CD4-positive, alpha-beta memory T cell (primary cell): ENCODE measurements at regions of chr4 and their contacts with region 1.

Region 1: GRCh38 chr4:2468445-2469192 is at the start of gene RNF4:
- DNase-seq: peak; percentile 94 to 98 (median 97)
- H3K4me3 ChIP-seq: peak within 1 kb of the TSS; percentile 67 to 84
- H3K4me3 Mint-ChIP-seq: peak within 1 kb of the TSS; percentile 95 to 98 (median 95)
- H3K27ac ChIP-seq: peak within 1 kb of the TSS; percentile 98
- H3K27ac Mint-ChIP-seq: peak within 1 kb of the TSS; percentile 96 to 99 (median 98)
- H3K4me1 ChIP-seq: peaks cover 52% of the 10 kb centered on the region
- H3K4me1 Mint-ChIP-seq: peaks cover 28 to 62% (median 41%) of the 10 kb centered on the region in 4 donors
- H3K27me3 ChIP-seq: no peaks in the 10 kb centered on the region
- H3K27me3 Mint-ChIP-seq: no peaks in the 10 kb centered on the region
- total RNA-seq, gene RNF4: 94.0 to 104 TPM

Region 2: DNA sequence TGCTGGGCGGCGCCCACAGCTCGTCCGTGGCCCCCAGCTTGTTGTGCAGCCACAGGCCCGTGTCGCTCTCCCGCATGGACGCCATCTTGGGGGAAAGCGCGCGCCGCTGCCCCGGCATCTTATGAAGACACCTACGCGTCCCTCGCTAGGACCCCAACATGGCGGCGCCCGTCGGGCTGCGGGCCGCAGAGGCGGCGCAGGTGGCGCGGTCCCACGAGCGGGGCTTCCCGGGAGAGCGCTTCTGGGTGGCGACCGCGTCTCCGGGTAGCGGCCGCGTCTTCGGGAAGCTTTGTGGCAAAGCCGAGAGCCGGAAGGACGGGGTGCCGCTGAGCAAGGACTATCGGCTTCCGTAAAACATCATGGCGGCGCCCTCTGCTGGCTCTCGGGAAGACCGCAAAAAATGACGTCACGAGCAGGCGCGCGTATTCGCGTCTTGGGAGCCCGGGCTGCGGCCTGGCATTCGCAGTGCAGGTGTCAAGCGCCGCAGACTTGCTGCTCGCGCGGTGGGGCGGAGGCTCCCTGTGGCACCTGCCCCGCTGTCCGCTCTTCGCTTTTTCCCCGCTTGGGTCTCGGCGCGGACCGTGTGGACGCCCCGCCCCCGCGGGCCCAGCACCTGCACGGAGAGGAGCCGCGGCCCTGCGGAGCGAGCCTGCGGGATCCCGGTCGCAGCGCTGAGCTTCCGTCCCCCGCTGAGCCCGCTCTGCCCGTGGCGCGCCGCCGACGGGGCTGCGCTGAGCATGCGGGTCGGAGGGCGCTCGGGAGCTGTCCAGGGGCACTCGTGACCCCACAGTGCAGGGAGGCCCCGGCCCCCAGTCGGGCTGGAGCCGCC is 459.5 kb before region 1 on chr4 and contains the start of gene NELFA:
- CTCF ChIA-PET with region 1: no interaction called
- POLR2A ChIA-PET with region 1: interaction called, 10 read pairs
- intact Hi-C with region 1: no loop called
- DNase-seq: peak; percentile 95 to 97 (median 97)
- H3K4me3 ChIP-seq: peak within 1 kb of the TSS; percentile 76 to 94
- H3K4me3 Mint-ChIP-seq: peak within 1 kb of the TSS; percentile 92 to 96 (median 94)
- H3K27ac ChIP-seq: peak within 1 kb of the TSS; percentile 95
- H3K27ac Mint-ChIP-seq: peak within 1 kb of the TSS; percentile 94 to 98 (median 97)
- H3K4me1 ChIP-seq: peaks cover 27% of the 10 kb centered on the region
- H3K4me1 Mint-ChIP-seq: peaks cover 29 to 42% (median 31%) of the 10 kb centered on the region in 4 donors
- H3K27me3 ChIP-seq: no peaks in the 10 kb centered on the region
- H3K27me3 Mint-ChIP-seq: no peaks in the 10 kb centered on the region
- total RNA-seq, gene NELFA: 47.0 to 48.3 TPM

Region 3: DNA sequence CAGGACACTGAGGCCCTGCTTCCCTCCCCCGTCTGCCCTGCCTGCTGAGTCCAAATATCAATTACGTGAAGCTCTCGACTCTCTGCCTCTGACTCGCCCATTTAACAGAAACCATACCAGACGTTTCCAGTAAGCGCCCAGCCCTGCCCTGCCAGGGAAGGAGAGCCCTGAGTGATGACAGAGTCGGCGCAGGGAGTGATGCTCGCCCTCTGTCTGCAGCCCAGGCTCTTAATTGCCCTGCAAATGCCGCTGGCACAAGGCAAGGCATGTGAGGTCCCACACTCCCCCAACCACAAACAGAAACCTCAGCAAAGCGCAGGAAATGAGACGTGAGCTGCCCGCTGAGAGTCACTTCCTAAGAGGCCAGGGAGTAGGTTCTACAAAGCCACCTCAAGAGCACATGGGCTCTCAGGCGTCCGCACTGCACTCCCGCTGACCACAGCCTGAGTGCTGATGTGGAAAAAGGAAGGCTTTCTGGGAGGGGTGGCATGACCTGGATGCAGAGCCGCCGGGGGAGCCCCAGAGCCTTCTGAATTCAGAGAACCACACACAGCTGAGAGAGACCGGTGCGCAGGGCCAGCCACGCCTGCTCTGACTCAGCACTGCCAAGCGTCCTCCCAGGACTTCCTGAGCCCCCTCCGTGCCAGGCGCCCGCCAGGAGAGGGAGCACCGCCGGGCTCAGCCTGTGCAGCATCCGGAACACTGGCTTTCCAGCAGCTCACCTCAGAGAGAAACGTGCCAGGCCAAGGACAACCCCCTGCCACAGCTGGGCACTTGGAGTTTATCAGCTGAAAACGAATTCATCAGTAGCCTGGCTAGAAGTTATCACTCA is 55.5 kb before region 1 on chr4:
- CTCF ChIA-PET with region 1: interaction called, 6 read pairs
- POLR2A ChIA-PET with region 1: interaction called, 57 read pairs
- intact Hi-C with region 1: loop called (anchors 1 kb)
- DNase-seq: peak; percentile 96 to 99 (median 97)
- H3K4me3 ChIP-seq: peak overlapping the region; percentile 15 to 55
- H3K4me3 Mint-ChIP-seq: peak overlapping the region; percentile 79 to 90 (median 82)
- H3K27ac ChIP-seq: peak overlapping the region; percentile 86
- H3K27ac Mint-ChIP-seq: peak overlapping the region; percentile 92 to 99 (median 98)
- H3K4me1 ChIP-seq: peaks cover 81% of the 10 kb centered on the region
- H3K4me1 Mint-ChIP-seq: peaks cover 49 to 81% (median 64%) of the 10 kb centered on the region in 4 donors
- H3K27me3 ChIP-seq: no peaks in the 10 kb centered on the region
- H3K27me3 Mint-ChIP-seq: peaks cover 0 to 2% of the 10 kb centered on the region in 2 donors

Region 4: GRCh38 chr4:2418650-2419571 is 49.7 kb before region 1 on chr4 and contains the start of gene CFAP99:
- CTCF ChIA-PET with region 1: interaction called, 5 read pairs
- POLR2A ChIA-PET with region 1: interaction called, 57 read pairs
- intact Hi-C with region 1: loop called (anchors 1 kb)
- DNase-seq: peak; percentile 96 to 99 (median 97)
- H3K4me3 ChIP-seq: peak within 1 kb of the TSS; percentile 44 to 72
- H3K4me3 Mint-ChIP-seq: peak within 1 kb of the TSS; percentile 89 to 95 (median 92)
- H3K27ac ChIP-seq: peak within 1 kb of the TSS; percentile 78
- H3K27ac Mint-ChIP-seq: peak within 1 kb of the TSS; percentile 92 to 100 (median 98)
- H3K4me1 ChIP-seq: peaks cover 39% of the 10 kb centered on the region
- H3K4me1 Mint-ChIP-seq: peaks cover 29 to 48% (median 36%) of the 10 kb centered on the region in 4 donors
- H3K27me3 ChIP-seq: no peaks in the 10 kb centered on the region
- H3K27me3 Mint-ChIP-seq: no peaks in the 10 kb centered on the region
- total RNA-seq, gene CFAP99: 0.12 to 0.19 TPM

Region 5: DNA sequence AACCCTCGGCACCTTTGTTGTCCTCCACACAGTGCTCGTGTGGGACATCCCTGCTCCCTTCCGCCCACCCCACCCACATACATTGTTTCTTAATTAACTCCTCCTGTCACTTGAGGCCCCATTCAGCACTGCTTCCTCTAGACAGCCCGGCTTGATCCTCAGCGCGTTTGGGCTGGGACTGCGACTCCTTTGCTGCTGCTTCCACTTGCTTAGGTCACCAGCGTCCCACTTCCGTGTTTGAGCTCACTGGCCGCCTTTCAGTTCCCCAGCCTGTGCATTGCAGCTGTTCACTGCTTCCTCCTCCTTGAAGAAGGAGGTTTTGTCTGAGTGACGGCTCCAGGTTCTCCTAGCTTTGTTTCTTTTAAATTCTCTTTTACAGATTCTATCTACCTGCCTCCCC is 16.4 kb after region 1 on chr4:
- CTCF ChIA-PET with region 1: interaction called, 15 read pairs
- POLR2A ChIA-PET with region 1: interaction called, 92 read pairs
- intact Hi-C with region 1: loop called (anchors 1 kb)
- DNase-seq: peak; percentile 64 to 82 (median 70)
- H3K4me3 ChIP-seq: peak overlapping the region; percentile 27 to 43
- H3K4me3 Mint-ChIP-seq: peak overlapping the region; percentile 53 to 92 (median 84)
- H3K27ac ChIP-seq: peak overlapping the region; percentile 52
- H3K27ac Mint-ChIP-seq: peak overlapping the region; percentile 75 to 94 (median 86)
- H3K4me1 ChIP-seq: peaks cover 79% of the 10 kb centered on the region
- H3K4me1 Mint-ChIP-seq: peaks cover 64 to 90% (median 76%) of the 10 kb centered on the region in 4 donors
- H3K27me3 ChIP-seq: no peaks in the 10 kb centered on the region
- H3K27me3 Mint-ChIP-seq: no peaks in the 10 kb centered on the region

Region 6: GRCh38 chr4:2500547-2500946 is 31.9 kb after region 1 on chr4:
- CTCF ChIA-PET with region 1: no interaction called
- POLR2A ChIA-PET with region 1: interaction called, 7 read pairs
- intact Hi-C with region 1: loop called (anchors 5 kb)
- DNase-seq: no peak
- H3K4me3 ChIP-seq: no peak overlapping the region
- H3K4me3 Mint-ChIP-seq: no peak overlapping the region
- H3K27ac ChIP-seq: no peak overlapping the region
- H3K27ac Mint-ChIP-seq: peak overlapping the region in 2 of 7 donors; percentile 12 to 50
- H3K4me1 ChIP-seq: no peaks in the 10 kb centered on the region
- H3K4me1 Mint-ChIP-seq: peaks cover 0 to 19% (median 10%) of the 10 kb centered on the region in 4 donors
- H3K27me3 ChIP-seq: no peaks in the 10 kb centered on the region
- H3K27me3 Mint-ChIP-seq: no peaks in the 10 kb centered on the region

Region 7: GRCh38 chr4:2536193-2537010 is 67.8 kb after region 1 on chr4 and contains the start of gene FAM193A:
- CTCF ChIA-PET with region 1: interaction called, 3 read pairs
- POLR2A ChIA-PET with region 1: interaction called, 49 read pairs
- intact Hi-C with region 1: loop called (anchors 1 kb)
- DNase-seq: peak; percentile 98 to 99 (median 99)
- H3K4me3 ChIP-seq: peak within 1 kb of the TSS; percentile 52 to 70
- H3K4me3 Mint-ChIP-seq: peak within 1 kb of the TSS; percentile 88 to 95 (median 92)
- H3K27ac ChIP-seq: peak within 1 kb of the TSS; percentile 83
- H3K27ac Mint-ChIP-seq: peak within 1 kb of the TSS; percentile 92 to 97 (median 94)
- H3K4me1 ChIP-seq: peaks cover 37% of the 10 kb centered on the region
- H3K4me1 Mint-ChIP-seq: peaks cover 10 to 44% (median 16%) of the 10 kb centered on the region in 4 donors
- H3K27me3 ChIP-seq: no peaks in the 10 kb centered on the region
- H3K27me3 Mint-ChIP-seq: no peaks in the 10 kb centered on the region
- total RNA-seq, gene FAM193A: 47.8 TPM